Keratinocyte (primary cell): ENCODE measurements at regions of chr2 and their contacts with region 1.

Region 1: GRCh38 chr2:216651351-216651881 is 18.2 kb downstream of the IGFBP2 start:
- DNase-seq: no peak
- H3K4me3 ChIP-seq: no peak overlapping the region
- H3K27ac ChIP-seq: no peak overlapping the region
- H3K4me1 ChIP-seq: no peaks in the 10 kb centered on the region
- H3K27me3 ChIP-seq: no peaks in the 10 kb centered on the region
- CTCF ChIP-seq: no peak

Region 2: GRCh38 chr2:216519154-216519762 is 132.2 kb before region 1 on chr2:
- dilution Hi-C with region 1: loop called (anchors 10 kb)
- DNase-seq: no peak
- H3K4me3 ChIP-seq: no peak overlapping the region
- H3K27ac ChIP-seq: no peak overlapping the region
- H3K4me1 ChIP-seq: no peaks in the 10 kb centered on the region
- H3K27me3 ChIP-seq: no peaks in the 10 kb centered on the region
- CTCF ChIP-seq: peak; percentile 55 to 75 (median 69)

Region 3: GRCh38 chr2:216692636-216693413 is 41.4 kb after region 1 on chr2:
- dilution Hi-C with region 1: no loop called
- DNase-seq: no peak
- H3K4me3 ChIP-seq: peak overlapping the region; percentile 26 to 60 (median 40)
- H3K27ac ChIP-seq: peak overlapping the region; percentile 0
- H3K4me1 ChIP-seq: peaks cover 51% of the 10 kb centered on the region
- H3K27me3 ChIP-seq: peaks cover 17% of the 10 kb centered on the region
- CTCF ChIP-seq: no peak